ENCODE measurements at regions of chrX and their contacts with region 1.

Region 1: DNA sequence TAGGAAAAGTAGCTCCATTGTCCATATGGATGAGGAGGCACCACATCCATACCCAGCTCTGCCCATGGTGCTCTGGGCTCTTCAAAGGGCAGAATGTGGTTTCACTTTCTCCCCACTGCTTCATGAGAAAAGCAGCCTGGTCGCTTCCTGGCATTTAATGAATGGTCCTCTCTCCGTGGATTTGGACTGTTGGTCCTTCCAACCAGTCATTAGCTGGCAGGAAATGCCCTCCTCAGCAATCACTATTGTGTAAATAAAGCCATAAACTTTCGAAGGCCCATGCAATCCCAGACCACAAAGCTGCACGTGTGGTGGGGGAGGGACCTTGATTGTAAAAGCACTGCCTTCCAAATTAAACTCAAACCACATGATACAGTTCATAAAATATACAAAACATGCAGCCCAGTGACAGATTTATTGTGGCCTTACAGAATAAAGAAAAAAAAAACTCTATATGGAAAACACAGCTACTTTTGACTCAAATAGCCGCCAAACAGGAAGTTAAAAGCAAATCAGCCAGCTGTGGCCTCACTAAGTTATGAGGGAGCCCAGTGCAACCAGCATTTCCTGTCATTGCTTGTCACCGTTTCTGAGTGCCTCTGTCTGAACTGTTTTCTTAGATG is 8.1 kb downstream of the MBNL3 start:
- DNase-seq: peak; percentile 55
- ATAC-seq: peak; percentile 90
- H3K4me3 ChIP-seq: peak overlapping the region; percentile 64
- H3K27ac ChIP-seq: peak overlapping the region; percentile 89
- H3K4me1 ChIP-seq: peaks cover 7% of the 10 kb centered on the region; the same call in 1 of the 2 replicates
- H3K27me3 ChIP-seq: no peaks in the 10 kb centered on the region
- CTCF ChIP-seq: no peak
- EP300 ChIP-seq: peak in 1 of 2 experiments; percentile 1; a peak in 1 of 4 replicates
- POLR2A ChIP-seq: no peak
- RAD21 ChIP-seq: no peak

Region 2: DNA sequence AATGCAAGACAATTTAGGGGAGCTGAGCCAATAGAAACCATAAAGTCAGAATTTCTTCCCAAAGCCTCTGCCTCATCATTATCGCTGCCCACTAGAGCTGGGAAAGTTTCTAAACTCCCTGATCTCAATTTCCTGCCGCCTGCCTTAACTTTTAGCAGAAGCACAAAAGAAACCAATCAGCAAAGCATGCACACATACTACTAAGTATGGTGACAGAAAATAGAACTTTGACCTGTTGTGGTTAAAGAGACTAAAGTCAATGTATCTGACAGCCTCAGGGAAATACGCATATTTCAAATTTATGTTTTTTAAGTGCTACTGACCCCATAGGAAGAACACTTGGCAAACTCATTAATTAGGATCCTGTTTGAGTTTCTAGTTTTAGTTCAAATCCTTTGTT is 447.5 kb before region 1 on chrX:
- CTCF ChIA-PET with region 1: no interaction called
- POLR2A ChIA-PET with region 1: no interaction called
- RAD21 ChIA-PET with region 1: no interaction called
- SMC1A ChIA-PET with region 1: no interaction called
- in situ Hi-C with region 1: no loop called
- intact Hi-C with region 1: loop called (anchors 5 kb)
- DNase-seq: no peak
- ATAC-seq: peak; percentile 75
- H3K4me3 ChIP-seq: peak overlapping the region; percentile 56; the same call in 1 of the 2 replicates
- H3K27ac ChIP-seq: peak overlapping the region; percentile 36
- H3K4me1 ChIP-seq: no peaks in the 10 kb centered on the region; the same call in 1 of the 2 replicates
- H3K27me3 ChIP-seq: no peaks in the 10 kb centered on the region
- CTCF ChIP-seq: no peak
- EP300 ChIP-seq: no peak
- POLR2A ChIP-seq: no peak
- RAD21 ChIP-seq: no peak

Region 3: DNA sequence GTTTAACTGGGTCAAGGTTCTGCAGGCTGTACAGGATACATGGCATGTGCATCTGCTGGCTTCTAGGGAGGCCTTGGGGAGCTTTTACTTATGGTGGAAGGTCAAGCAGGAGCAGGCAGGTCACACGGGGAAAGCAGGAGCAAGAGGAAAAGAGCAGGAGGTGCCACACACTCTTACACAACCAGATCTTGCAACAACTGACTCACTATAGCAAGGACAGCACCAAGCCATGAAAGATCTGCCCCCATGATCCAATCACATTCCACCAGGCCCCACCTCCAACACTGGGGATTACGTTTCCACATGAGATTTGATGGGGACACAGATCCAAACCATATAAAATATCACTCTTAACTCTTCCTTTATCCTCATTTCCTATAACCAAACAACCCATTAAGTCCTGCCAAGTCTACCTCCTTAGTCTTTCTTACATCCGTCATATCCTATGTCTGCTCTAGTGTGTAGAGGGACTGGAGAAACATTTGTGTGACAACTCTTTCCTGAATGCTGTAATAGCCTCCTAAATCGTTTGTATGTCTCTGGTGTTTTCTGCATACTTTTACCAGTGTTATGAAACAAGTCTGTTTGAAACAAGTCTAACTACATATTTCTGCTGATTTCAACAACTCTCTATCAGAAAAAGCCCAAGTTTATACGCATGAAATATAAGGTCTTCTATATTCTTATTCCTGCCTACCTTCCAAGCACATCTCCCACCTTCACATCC is 253.1 kb before region 1 on chrX:
- CTCF ChIA-PET with region 1: no interaction called
- POLR2A ChIA-PET with region 1: no interaction called
- RAD21 ChIA-PET with region 1: no interaction called
- SMC1A ChIA-PET with region 1: no interaction called
- in situ Hi-C with region 1: no loop called
- intact Hi-C with region 1: no loop called
- DNase-seq: no peak
- ATAC-seq: no peak
- H3K4me3 ChIP-seq: no peak overlapping the region
- H3K27ac ChIP-seq: no peak overlapping the region
- H3K4me1 ChIP-seq: no peaks in the 10 kb centered on the region
- H3K27me3 ChIP-seq: no peaks in the 10 kb centered on the region
- CTCF ChIP-seq: no peak
- EP300 ChIP-seq: no peak
- POLR2A ChIP-seq: no peak
- RAD21 ChIP-seq: no peak

Measured in GM12878 (cell line).